ENCODE measurements at regions of chr12 and their contacts with region 1.

Region 1: DNA sequence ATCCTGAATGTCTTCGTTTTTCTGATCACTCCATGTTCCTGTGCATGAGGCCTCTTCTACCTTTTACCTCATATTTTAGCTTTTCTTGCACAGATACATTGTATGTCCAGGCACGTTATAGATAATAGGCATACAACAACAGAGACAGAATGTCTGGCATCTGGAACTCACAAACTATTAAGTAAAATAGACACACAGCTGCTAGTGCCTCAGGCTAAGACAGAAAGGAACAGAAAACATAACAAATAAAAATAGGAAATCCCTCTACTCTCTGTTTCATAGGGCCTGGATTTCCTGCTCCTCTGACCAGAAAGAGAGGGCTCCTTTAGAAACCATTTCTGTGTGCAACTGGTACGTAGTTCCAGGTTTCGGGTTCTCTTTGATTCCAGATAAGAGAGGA is 48.6 kb downstream of the ATXN7L3B start:
- DNase-seq: no peak
- H3K4me3 ChIP-seq: no peak overlapping the region
- H3K27ac ChIP-seq: no peak overlapping the region
- H3K4me1 ChIP-seq: no peaks in the 10 kb centered on the region
- H3K27me3 ChIP-seq: no peaks in the 10 kb centered on the region
- CTCF ChIP-seq: no peak
- POLR2A ChIP-seq: no peak

Region 2: GRCh38 chr12:74490390-74491064 is 95.7 kb before region 1 on chr12:
- intact Hi-C with region 1: no loop called
- DNase-seq: no peak
- H3K4me3 ChIP-seq: no peak overlapping the region
- H3K27ac ChIP-seq: no peak overlapping the region
- H3K4me1 ChIP-seq: no peaks in the 10 kb centered on the region
- H3K27me3 ChIP-seq: no peaks in the 10 kb centered on the region
- CTCF ChIP-seq: no peak
- POLR2A ChIP-seq: no peak

Region 3: GRCh38 chr12:74602881-74603523 is 16.8 kb after region 1 on chr12:
- intact Hi-C with region 1: loop called (anchors 1 kb)
- DNase-seq: no peak
- H3K4me3 ChIP-seq: no peak overlapping the region
- H3K27ac ChIP-seq: no peak overlapping the region
- H3K4me1 ChIP-seq: no peaks in the 10 kb centered on the region
- H3K27me3 ChIP-seq: no peaks in the 10 kb centered on the region
- CTCF ChIP-seq: no peak
- POLR2A ChIP-seq: no peak

Region 4: GRCh38 chr12:74685385-74685784 is 99.1 kb after region 1 on chr12:
- intact Hi-C with region 1: no loop called
- DNase-seq: no peak
- H3K4me3 ChIP-seq: no peak overlapping the region
- H3K27ac ChIP-seq: no peak overlapping the region
- H3K4me1 ChIP-seq: no peaks in the 10 kb centered on the region
- H3K27me3 ChIP-seq: no peaks in the 10 kb centered on the region
- CTCF ChIP-seq: no peak
- POLR2A ChIP-seq: no peak

Region 5: GRCh38 chr12:74957231-74957630 is 371.0 kb after region 1 on chr12:
- intact Hi-C with region 1: no loop called
- DNase-seq: no peak
- H3K4me3 ChIP-seq: no peak overlapping the region
- H3K27ac ChIP-seq: no peak overlapping the region
- H3K4me1 ChIP-seq: no peaks in the 10 kb centered on the region
- H3K27me3 ChIP-seq: no peaks in the 10 kb centered on the region
- CTCF ChIP-seq: no peak
- POLR2A ChIP-seq: no peak